CD4-positive, alpha-beta T cell (primary cell): ENCODE measurements at regions of chr18 and their contacts with region 1.

Region 1: DNA sequence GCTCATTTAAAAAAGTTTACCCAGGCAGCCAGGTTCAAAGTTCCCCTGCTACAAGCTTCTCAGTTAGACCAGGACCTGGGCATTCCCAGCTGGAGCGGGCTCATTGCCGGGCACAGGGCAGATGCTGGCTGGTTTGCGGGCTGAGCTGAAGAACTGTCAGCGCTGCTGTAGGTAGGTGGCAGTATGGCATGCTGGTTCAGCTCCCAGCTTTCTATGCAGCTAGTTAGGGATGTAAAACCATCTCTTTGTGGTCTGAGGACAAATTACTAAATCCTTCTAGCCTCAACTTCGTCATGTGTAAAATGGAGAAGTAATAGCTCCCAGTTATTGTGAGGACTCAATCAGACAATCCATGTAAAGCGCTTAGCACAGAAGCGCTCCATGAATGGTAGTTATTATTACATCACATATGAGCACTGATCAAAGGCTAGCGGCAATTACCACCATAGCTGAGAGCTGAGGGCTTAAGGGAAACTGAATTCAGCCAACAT is 2.4 kb upstream of the LDLRAD4 start:
- DNase-seq: peak; percentile 30 to 82 (median 51)
- ATAC-seq: peak; percentile 57
- H3K4me3 ChIP-seq: peak overlapping the region; percentile 58
- H3K4me3 Mint-ChIP-seq: peak overlapping the region; percentile 98
- H3K27ac ChIP-seq: peak overlapping the region in 1 of 2 donors; percentile 15
- H3K27ac Mint-ChIP-seq: peak overlapping the region; percentile 90
- H3K4me1 ChIP-seq: peaks cover 27% of the 10 kb centered on the region
- H3K4me1 Mint-ChIP-seq: peaks cover 35% of the 10 kb centered on the region
- H3K27me3 ChIP-seq: peaks cover 0 to 5% of the 10 kb centered on the region in 2 experiments
- H3K27me3 Mint-ChIP-seq: peaks cover 9% of the 10 kb centered on the region
- CTCF ChIP-seq: peak; percentile 81

Region 2: GRCh38 chr18:13076886-13077285 is 139.3 kb before region 1 on chr18:
- CTCF ChIA-PET with region 1: no interaction called
- POLR2A ChIA-PET with region 1: no interaction called
- intact Hi-C with region 1: no loop called
- DNase-seq: no peak
- ATAC-seq: no peak
- H3K4me3 ChIP-seq: no peak overlapping the region
- H3K4me3 Mint-ChIP-seq: no peak overlapping the region
- H3K27ac ChIP-seq: no peak overlapping the region
- H3K27ac Mint-ChIP-seq: no peak overlapping the region
- H3K4me1 ChIP-seq: no peaks in the 10 kb centered on the region
- H3K4me1 Mint-ChIP-seq: no peaks in the 10 kb centered on the region
- H3K27me3 ChIP-seq: no peaks in the 10 kb centered on the region
- H3K27me3 Mint-ChIP-seq: no peaks in the 10 kb centered on the region
- CTCF ChIP-seq: no peak

Region 3: GRCh38 chr18:13268158-13269012 is 52.2 kb after region 1 on chr18:
- CTCF ChIA-PET with region 1: interaction called, 3 read pairs
- POLR2A ChIA-PET with region 1: interaction called, 3 read pairs
- intact Hi-C with region 1: loop called (anchors 2 to 5 kb)
- DNase-seq: no peak
- ATAC-seq: no peak
- H3K4me3 ChIP-seq: no peak overlapping the region
- H3K4me3 Mint-ChIP-seq: peak overlapping the region; percentile 67
- H3K27ac ChIP-seq: no peak overlapping the region
- H3K27ac Mint-ChIP-seq: peak overlapping the region; percentile 82
- H3K4me1 ChIP-seq: peaks cover 57% of the 10 kb centered on the region
- H3K4me1 Mint-ChIP-seq: peaks cover 73% of the 10 kb centered on the region
- H3K27me3 ChIP-seq: no peaks in the 10 kb centered on the region
- H3K27me3 Mint-ChIP-seq: no peaks in the 10 kb centered on the region
- CTCF ChIP-seq: no peak

Region 4: DNA sequence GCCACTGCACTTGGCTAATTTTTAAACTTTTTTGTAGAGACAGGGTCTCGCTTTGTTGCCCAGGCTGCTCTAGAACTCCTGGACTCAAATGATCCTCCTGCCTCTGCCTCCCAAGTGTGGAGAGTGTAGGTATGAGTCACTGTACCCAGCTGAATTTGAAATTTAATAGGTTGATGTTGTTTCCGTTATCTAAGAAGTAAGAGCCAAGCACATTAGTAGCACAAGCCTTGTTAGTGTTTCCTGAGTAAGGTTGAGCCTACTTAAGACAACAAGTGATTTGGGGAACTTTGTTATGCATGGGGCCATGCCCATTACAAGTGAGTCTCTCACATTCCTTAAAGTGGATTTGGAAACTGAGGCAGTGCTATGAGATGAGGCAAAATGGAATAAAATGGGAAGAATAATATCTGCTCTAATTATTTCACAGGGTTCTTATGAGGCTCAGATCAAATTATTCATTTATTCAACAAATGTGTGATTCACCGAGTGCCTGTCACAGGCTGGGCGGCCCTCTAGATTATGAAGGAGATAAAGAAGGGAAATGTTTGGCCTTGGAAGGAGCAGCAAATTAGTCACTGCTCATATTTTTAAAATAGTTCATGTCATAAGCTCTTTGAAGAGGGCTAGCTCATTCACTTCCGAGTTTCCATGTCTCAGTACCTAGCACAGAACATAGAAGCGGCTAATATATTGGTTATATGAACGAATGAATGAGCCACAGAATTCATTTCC is 219.6 kb after region 1 on chr18:
- CTCF ChIA-PET with region 1: interaction called, 4 read pairs
- POLR2A ChIA-PET with region 1: no interaction called
- intact Hi-C with region 1: loop called in 1 of 2 experiments (anchors 5 kb)
- DNase-seq: peak in 2 of 14 experiments; percentile 36 to 55
- ATAC-seq: peak; percentile 15
- H3K4me3 ChIP-seq: no peak overlapping the region
- H3K4me3 Mint-ChIP-seq: peak overlapping the region; percentile 46
- H3K27ac ChIP-seq: peak overlapping the region in 1 of 2 donors; percentile 58
- H3K27ac Mint-ChIP-seq: peak overlapping the region; percentile 88
- H3K4me1 ChIP-seq: peaks cover 47% of the 10 kb centered on the region
- H3K4me1 Mint-ChIP-seq: peaks cover 61% of the 10 kb centered on the region
- H3K27me3 ChIP-seq: no peaks in the 10 kb centered on the region
- H3K27me3 Mint-ChIP-seq: no peaks in the 10 kb centered on the region
- CTCF ChIP-seq: no peak

Region 5: DNA sequence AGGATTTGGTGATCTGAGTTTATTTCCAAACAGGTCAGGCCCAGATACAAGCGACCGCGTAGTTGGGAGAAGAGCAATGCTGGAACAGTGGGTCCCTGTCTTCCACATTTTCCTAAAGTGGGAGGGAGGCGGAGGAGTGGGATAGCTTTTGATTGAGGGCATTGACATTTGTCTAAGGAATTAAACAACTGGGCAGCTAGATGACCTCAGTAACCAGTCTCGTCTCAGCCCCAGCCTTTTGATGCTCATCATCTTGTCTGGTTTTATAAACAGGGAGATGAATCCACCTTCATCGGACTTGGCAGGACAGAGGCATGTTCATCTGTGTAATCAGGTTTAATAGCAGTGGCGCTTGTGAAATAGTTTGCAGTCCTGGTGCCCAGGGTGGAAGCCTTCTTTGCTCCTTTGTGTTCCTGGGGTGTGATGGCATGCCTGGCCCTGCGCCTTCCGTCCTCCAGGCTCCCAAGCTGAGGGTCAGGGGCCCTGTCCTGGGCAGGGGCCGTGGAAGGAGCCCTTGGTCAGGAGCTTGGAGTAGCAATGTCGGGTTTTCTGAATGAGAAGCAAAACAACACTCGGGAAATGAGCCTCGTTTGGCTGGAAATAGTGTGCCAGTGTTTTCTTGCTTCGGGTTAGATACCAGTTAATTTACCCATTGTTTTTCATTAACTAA is 316.4 kb after region 1 on chr18:
- CTCF ChIA-PET with region 1: no interaction called
- POLR2A ChIA-PET with region 1: interaction called, 7 read pairs
- intact Hi-C with region 1: loop called in 1 of 2 experiments (anchors 2 kb)
- DNase-seq: no peak
- ATAC-seq: no peak
- H3K4me3 ChIP-seq: no peak overlapping the region
- H3K4me3 Mint-ChIP-seq: no peak overlapping the region
- H3K27ac ChIP-seq: no peak overlapping the region
- H3K27ac Mint-ChIP-seq: peak overlapping the region; percentile 53
- H3K4me1 ChIP-seq: peaks cover 12% of the 10 kb centered on the region
- H3K4me1 Mint-ChIP-seq: peaks cover 52% of the 10 kb centered on the region
- H3K27me3 ChIP-seq: no peaks in the 10 kb centered on the region
- H3K27me3 Mint-ChIP-seq: no peaks in the 10 kb centered on the region
- CTCF ChIP-seq: no peak

Region 6: DNA sequence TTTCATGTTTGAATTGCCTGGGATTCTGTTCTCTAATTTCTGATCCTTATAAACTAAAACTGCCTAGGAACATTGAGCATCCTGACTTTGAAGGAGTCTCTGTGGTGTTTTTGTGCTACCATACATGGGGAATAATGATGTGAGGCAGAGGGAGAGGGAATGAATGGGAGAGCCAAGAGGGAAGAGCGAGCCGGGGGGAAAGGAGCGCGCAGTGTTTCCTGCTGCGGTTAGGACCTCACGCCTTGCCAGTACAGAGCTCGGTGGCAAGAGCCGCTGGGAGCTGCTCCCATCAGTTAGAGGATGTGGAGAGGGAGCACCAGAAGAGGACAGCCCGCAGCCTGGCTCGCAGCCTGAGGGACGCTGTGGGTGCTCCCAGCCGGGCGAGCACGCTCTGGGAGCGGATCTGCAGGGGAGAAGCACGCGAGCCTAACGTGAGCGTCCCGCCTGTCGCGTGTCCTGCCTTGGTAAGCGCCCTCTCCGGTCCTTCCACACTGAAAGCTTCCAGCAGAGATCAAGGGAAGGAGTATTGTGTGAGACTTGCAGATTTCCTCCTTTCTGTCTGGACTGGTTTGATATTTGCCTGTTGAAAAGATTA is 395.6 kb after region 1 on chr18:
- CTCF ChIA-PET with region 1: interaction called, 3 read pairs
- POLR2A ChIA-PET with region 1: interaction called, 6 read pairs
- intact Hi-C with region 1: loop called in 1 of 2 experiments (anchors 1 kb)
- DNase-seq: peak in 1 of 14 experiments; percentile 12
- ATAC-seq: no peak
- H3K4me3 ChIP-seq: peak overlapping the region; percentile 51
- H3K4me3 Mint-ChIP-seq: peak overlapping the region; percentile 86
- H3K27ac ChIP-seq: peak overlapping the region; percentile 13 to 38
- H3K27ac Mint-ChIP-seq: peak overlapping the region; percentile 90
- H3K4me1 ChIP-seq: peaks cover 82% of the 10 kb centered on the region
- H3K4me1 Mint-ChIP-seq: peaks cover 85% of the 10 kb centered on the region
- H3K27me3 ChIP-seq: no peaks in the 10 kb centered on the region
- H3K27me3 Mint-ChIP-seq: no peaks in the 10 kb centered on the region
- CTCF ChIP-seq: no peak

Region 7: GRCh38 chr18:13800505-13801259 is 584.5 kb after region 1 on chr18:
- CTCF ChIA-PET with region 1: no interaction called
- POLR2A ChIA-PET with region 1: no interaction called
- intact Hi-C with region 1: loop called in 1 of 2 experiments (anchors 5 kb)
- DNase-seq: peak; percentile 14 to 60 (median 35)
- ATAC-seq: peak; percentile 62
- H3K4me3 ChIP-seq: no peak overlapping the region
- H3K4me3 Mint-ChIP-seq: peak overlapping the region; percentile 44
- H3K27ac ChIP-seq: no peak overlapping the region
- H3K27ac Mint-ChIP-seq: no peak overlapping the region
- H3K4me1 ChIP-seq: peaks cover 8% of the 10 kb centered on the region
- H3K4me1 Mint-ChIP-seq: peaks cover 6% of the 10 kb centered on the region
- H3K27me3 ChIP-seq: peaks cover 37 to 52% of the 10 kb centered on the region in 2 experiments
- H3K27me3 Mint-ChIP-seq: peaks cover 80% of the 10 kb centered on the region
- CTCF ChIP-seq: peak; percentile 38